Mammary epithelial cell (primary cell): ENCODE measurements at regions of chr22 and their contacts with region 1.

Region 1: DNA sequence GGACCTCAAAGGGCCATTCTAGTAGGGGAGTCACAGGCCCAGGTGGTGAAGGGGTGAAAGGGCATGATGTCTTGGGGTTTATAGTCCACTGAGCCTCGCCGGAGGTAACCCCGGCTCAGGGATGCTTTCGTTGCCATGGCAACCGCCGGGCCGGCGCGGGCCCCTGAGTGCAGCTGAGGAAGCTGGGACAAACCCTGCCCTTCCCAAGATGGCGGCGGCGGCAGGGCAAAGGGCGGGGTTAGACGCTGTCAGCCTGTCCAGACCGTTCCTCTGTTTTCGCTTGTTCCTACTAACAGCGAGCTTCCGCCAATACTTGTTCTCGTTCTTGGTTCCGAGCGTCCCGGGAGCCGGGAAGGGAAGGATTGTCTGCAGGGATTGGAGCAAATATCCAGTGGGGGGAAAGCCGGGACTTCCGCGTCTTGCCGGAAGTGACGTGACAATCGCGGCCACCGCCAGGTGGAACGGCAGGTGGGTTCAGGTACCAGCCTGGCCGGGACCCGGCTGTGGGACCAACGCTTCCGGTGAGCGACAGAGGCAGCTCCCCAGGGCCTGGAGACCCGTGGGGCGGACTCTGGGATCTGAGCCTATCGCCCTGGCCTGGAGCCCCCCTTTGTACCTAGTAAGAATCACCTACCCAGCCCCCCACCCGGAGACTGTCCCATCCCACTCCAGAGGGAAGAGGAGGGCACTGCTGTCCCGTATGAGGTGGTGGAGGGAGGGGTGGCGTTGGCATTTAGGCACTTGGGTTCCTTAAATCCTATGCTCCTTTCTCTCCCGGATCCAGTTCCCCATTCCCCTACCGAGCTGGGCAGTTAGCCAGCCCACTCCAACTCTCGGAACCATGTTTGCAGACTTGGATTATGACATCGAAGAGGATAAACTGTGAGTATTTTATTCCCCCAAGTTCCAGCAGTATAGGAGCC is at the start of gene PICK1:
- DNase-seq: peak; percentile 93
- H3K4me3 ChIP-seq: peak within 1 kb of the TSS; percentile 65 to 71 (median 71)
- H3K27ac ChIP-seq: peak within 1 kb of the TSS; percentile 73
- H3K4me1 ChIP-seq: peaks cover 6% of the 10 kb centered on the region
- H3K27me3 ChIP-seq: no peaks in the 10 kb centered on the region
- CTCF ChIP-seq: peak in 1 of 2 donors; percentile 20
- total RNA-seq, gene PICK1: 38.8 to 40.7 TPM

Region 2: DNA sequence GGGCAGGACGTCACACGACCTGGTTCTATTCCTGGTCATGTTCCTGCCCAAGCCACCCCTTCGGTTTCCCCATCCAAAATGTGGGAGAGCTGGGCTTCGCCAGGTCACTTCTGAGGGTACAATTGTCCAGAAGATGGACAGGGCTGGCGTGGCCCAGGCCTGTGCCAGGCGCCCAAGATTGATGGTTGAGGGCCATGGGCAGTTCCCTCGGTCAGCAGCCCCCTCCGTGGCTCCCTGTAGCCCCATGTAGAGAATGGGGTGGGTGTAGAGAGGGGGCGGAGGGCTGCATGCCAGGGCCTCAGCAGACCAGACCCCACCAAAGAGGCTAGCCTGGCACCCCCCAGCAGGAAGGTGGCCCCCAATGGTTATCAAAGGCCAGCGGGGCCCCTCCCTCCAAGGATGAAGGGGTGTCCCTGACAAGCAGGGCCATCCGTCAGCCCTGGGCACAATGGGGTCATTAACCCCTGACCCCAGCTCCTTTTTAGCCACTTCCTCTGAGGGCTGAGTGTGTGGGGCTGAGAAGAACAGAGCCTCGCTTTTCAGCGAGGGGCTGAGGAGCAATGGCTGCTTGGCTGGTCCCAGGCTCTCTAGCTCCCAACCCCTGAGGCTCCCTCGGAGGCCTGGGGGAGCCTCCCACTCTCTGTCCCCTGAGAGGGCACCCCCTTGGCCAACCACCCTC is 11.0 kb before region 1 on chr22:
- CTCF ChIA-PET with region 1: no interaction called
- dilution Hi-C with region 1: no loop called
- in situ Hi-C with region 1: no loop called
- intact Hi-C with region 1: no loop called
- DNase-seq: no peak
- H3K4me3 ChIP-seq: no peak overlapping the region
- H3K27ac ChIP-seq: no peak overlapping the region
- H3K4me1 ChIP-seq: no peaks in the 10 kb centered on the region
- H3K27me3 ChIP-seq: no peaks in the 10 kb centered on the region
- CTCF ChIP-seq: no peak

Region 3: GRCh38 chr22:38262051-38262795 is 205.0 kb after region 1 on chr22:
- CTCF ChIA-PET with region 1: no interaction called
- dilution Hi-C with region 1: loop called (anchors 5 kb)
- in situ Hi-C with region 1: no loop called
- intact Hi-C with region 1: no loop called
- DNase-seq: peak; percentile 81
- H3K4me3 ChIP-seq: no peak overlapping the region
- H3K27ac ChIP-seq: no peak overlapping the region
- H3K4me1 ChIP-seq: peaks cover 15% of the 10 kb centered on the region
- H3K27me3 ChIP-seq: no peaks in the 10 kb centered on the region
- CTCF ChIP-seq: peak; percentile 51 to 85

Region 4: GRCh38 chr22:38481162-38481870 is 424.1 kb after region 1 on chr22:
- CTCF ChIA-PET with region 1: no interaction called
- dilution Hi-C with region 1: loop called (anchors 5 kb)
- in situ Hi-C with region 1: no loop called
- intact Hi-C with region 1: loop called (anchors 5 kb)
- DNase-seq: no peak
- H3K4me3 ChIP-seq: no peak overlapping the region
- H3K27ac ChIP-seq: no peak overlapping the region
- H3K4me1 ChIP-seq: peaks cover 8% of the 10 kb centered on the region
- H3K27me3 ChIP-seq: no peaks in the 10 kb centered on the region
- CTCF ChIP-seq: no peak